Activated T-helper 2 cell treated with anti-CD3 and anti-CD28 coated beads, Interferon-gamma antibody, Interleukin-2, Interleukin-4, amounts not matched to agents 10 μg/mL and 5 μg/mL and 100 μg/mL, durations not matched to agents 14 hours and 24 hours and 36 hours (primary cell): ENCODE measurements at regions of chr14 and their contacts with region 1.

Region 1: GRCh38 chr14:65412032-65412846 is at the start of gene FUT8:
- DNase-seq: peak; percentile 90
- H3K4me3 Mint-ChIP-seq: peak within 1 kb of the TSS; percentile 95
- H3K27ac Mint-ChIP-seq: peak within 1 kb of the TSS; percentile 95
- H3K4me1 Mint-ChIP-seq: peaks cover 37% of the 10 kb centered on the region
- H3K27me3 Mint-ChIP-seq: no peaks in the 10 kb centered on the region
- total RNA-seq, gene FUT8: 110 and 124 TPM in 2 replicates

Region 2: DNA sequence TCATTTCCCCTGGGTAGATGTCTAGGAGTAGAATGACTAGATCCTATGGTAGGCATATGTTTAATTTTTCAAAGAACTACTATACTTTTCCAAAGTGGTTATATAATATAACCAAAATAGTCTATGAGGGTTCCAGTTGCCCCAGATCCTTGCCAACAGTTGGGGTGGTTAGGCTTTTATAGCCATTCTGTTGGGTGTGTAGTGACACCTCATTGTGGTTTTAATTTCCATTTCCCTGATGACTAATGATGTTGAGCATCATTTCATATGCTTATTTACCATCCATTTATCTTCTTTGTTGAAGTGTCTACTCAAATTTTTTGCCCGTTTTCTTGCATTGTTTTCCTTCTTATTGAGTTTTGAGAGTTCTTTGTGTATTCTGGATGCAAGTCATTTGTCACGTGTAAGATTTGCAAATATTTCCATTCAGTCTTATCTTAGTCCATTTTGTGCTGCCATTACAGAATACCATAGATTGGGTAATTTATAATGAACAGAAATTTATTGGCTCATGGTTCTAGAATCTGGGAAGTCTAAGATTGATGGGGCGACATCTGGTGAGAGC is 1554.7 kb before region 1 on chr14:
- intact Hi-C with region 1: no loop called
- DNase-seq: no peak
- H3K4me3 Mint-ChIP-seq: no peak overlapping the region
- H3K27ac Mint-ChIP-seq: peak overlapping the region; percentile 10
- H3K4me1 Mint-ChIP-seq: peaks cover 39% of the 10 kb centered on the region
- H3K27me3 Mint-ChIP-seq: peaks cover 29% of the 10 kb centered on the region

Region 3: GRCh38 chr14:64986578-64987571 is 425.4 kb before region 1 on chr14 and contains the start of gene FNTB:
- intact Hi-C with region 1: loop called (anchors 5 kb)
- DNase-seq: peak; percentile 90
- H3K4me3 Mint-ChIP-seq: peak within 1 kb of the TSS; percentile 93
- H3K27ac Mint-ChIP-seq: peak within 1 kb of the TSS; percentile 96
- H3K4me1 Mint-ChIP-seq: peaks cover 43% of the 10 kb centered on the region
- H3K27me3 Mint-ChIP-seq: peaks cover 20% of the 10 kb centered on the region
- total RNA-seq, gene FNTB: 14.8 and 17.5 TPM in 2 replicates

Region 4: GRCh38 chr14:65206448-65207096 is 205.7 kb before region 1 on chr14:
- intact Hi-C with region 1: loop called (anchors 2 kb)
- DNase-seq: no peak
- H3K4me3 Mint-ChIP-seq: peak overlapping the region; percentile 64
- H3K27ac Mint-ChIP-seq: peak overlapping the region; percentile 91
- H3K4me1 Mint-ChIP-seq: peaks cover 61% of the 10 kb centered on the region
- H3K27me3 Mint-ChIP-seq: no peaks in the 10 kb centered on the region

Region 5: DNA sequence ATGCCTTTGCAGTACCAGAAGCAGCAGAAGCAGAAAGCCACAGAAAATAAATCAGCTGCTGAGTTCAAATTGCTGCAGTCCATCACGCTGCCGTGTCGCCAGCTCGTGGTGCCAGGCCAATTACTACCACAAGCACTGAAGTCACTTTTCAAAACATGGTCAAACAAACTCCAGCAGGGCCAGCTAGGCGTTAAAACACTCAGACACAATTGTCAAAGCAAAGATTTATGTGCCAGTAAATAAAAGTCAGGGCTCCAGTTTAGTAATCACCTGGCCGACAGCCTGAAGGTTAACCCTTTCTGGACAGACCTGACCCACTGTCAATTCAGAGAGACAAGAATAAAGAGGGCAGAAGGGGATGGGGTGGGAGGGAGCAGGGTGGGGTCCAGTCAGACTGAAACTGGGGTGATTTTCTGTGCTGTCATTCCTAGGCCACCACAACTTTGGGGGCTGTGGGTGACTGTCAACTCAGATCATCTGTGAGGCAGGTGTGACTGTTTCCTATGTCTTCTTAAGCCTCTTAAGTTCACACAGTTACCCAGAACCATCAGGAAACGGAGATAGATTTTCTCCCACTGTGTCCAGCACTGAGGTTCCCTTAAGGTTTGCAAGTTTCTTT is 109.6 kb before region 1 on chr14:
- intact Hi-C with region 1: loop called (anchors 5 kb)
- DNase-seq: peak; percentile 24
- H3K4me3 Mint-ChIP-seq: peak overlapping the region; percentile 53
- H3K27ac Mint-ChIP-seq: peak overlapping the region; percentile 94
- H3K4me1 Mint-ChIP-seq: peaks cover 63% of the 10 kb centered on the region
- H3K27me3 Mint-ChIP-seq: no peaks in the 10 kb centered on the region

Region 6: DNA sequence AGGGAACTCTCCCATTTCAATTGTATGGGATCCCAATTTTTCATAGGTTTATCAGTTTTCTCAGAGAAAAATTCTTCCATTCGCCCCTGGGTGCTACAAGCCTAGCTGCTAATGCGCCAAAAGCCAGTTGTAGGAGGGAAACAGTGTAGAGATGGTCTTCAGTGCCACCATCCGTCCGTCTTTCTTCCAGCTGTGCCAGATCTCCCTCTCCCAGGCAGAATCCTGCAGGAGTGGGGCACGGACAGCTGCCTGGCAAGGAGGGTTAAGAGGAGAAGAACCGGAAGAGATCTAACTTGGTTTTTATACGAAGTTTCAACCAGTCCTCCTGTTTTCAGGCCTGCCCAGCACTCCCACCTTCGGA is 38.6 kb before region 1 on chr14:
- intact Hi-C with region 1: loop called (anchors 5 kb)
- DNase-seq: no peak
- H3K4me3 Mint-ChIP-seq: no peak overlapping the region
- H3K27ac Mint-ChIP-seq: peak overlapping the region; percentile 50
- H3K4me1 Mint-ChIP-seq: peaks cover 42% of the 10 kb centered on the region
- H3K27me3 Mint-ChIP-seq: no peaks in the 10 kb centered on the region

Region 7: DNA sequence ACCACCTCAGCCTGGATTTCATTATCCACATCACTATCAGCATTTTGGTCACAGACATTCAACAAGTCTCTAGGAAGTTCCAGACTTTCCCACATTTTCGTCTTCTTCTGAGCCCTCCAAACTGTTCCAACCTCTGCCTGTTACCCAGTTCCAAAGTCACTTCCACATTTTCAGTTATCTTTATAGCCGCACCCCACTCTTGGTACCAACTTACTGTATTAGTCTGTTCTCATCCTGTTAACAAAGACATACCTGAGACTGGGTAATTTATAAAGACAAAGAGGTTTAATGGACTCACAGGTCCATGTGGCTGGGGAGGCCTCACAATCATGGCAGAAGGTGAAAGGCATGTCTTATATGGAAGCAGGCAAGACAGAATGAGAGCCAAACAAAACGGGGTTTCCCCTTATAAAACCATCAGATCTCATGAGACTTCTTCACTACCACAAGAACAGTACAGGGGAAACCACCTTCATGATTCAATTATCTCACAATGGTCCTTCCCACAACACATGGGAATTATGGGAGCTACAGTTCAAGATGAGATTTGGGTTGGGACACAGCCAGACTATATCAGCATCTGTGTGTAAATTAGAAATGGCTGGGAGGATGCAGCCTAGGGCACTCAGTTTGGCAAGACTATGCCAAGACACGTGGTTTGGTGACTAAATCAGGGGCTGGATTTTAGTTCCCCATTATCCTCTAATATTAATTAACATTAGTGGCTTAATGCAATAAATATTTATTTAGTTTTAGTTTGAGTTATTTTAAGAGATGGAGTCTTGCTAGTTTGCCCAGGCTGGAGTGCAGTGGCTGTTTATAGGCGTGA is 15.9 kb before region 1 on chr14:
- intact Hi-C with region 1: no loop called
- DNase-seq: no peak
- H3K4me3 Mint-ChIP-seq: no peak overlapping the region
- H3K27ac Mint-ChIP-seq: no peak overlapping the region
- H3K4me1 Mint-ChIP-seq: peaks cover 16% of the 10 kb centered on the region
- H3K27me3 Mint-ChIP-seq: no peaks in the 10 kb centered on the region

Region 8: GRCh38 chr14:65731933-65732510 is 319.8 kb after region 1 on chr14:
- intact Hi-C with region 1: loop called (anchors 10 kb)
- DNase-seq: no peak
- H3K4me3 Mint-ChIP-seq: no peak overlapping the region
- H3K27ac Mint-ChIP-seq: peak overlapping the region; percentile 73
- H3K4me1 Mint-ChIP-seq: peaks cover 12% of the 10 kb centered on the region
- H3K27me3 Mint-ChIP-seq: no peaks in the 10 kb centered on the region

Region 9: GRCh38 chr14:65958664-65959562 is 546.7 kb after region 1 on chr14:
- intact Hi-C with region 1: loop called (anchors 5 kb)
- DNase-seq: no peak
- H3K4me3 Mint-ChIP-seq: no peak overlapping the region
- H3K27ac Mint-ChIP-seq: no peak overlapping the region
- H3K4me1 Mint-ChIP-seq: peaks cover 25% of the 10 kb centered on the region
- H3K27me3 Mint-ChIP-seq: peaks cover 15% of the 10 kb centered on the region